ENCODE measurements at regions of chr3 and their contacts with region 1.

Region 1: GRCh38 chr3:133487920-133488540 is 85.5 kb upstream of the CDV3 start:
- DNase-seq: no peak
- ATAC-seq: no peak
- H3K4me3 ChIP-seq: no peak overlapping the region; the same call in 1 of the 2 replicates
- H3K27ac ChIP-seq: no peak overlapping the region
- H3K4me1 ChIP-seq: peaks cover 48% of the 10 kb centered on the region
- H3K27me3 ChIP-seq: no peaks in the 10 kb centered on the region
- CTCF ChIP-seq: peak; percentile 26 to 36 (median 35); a peak in 3 of 6 replicates
- EP300 ChIP-seq: no peak
- POLR2A ChIP-seq: no peak
- RAD21 ChIP-seq: peak; percentile 57

Region 2: DNA sequence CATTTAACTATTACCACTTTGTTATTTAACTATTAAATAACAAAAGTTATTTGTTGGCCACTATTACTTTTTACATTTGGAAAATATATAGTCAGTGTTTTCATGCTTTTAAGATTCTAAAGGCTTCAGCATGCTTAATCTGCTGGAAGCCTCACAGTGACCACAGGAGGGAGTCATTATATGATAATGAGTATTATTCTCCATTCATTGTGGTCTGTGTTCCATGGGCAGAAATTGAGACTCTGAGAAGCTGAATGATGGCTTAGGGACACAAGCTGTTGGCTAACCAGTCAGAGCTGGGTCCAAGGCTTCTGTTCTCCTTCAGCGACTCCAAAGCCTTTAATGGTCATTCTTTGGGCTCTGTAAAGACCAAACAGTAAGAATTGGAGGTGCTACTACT is 23.5 kb before region 1 on chr3:
- CTCF ChIA-PET with region 1: interaction called, 25 read pairs
- POLR2A ChIA-PET with region 1: interaction called, 5 read pairs
- RAD21 ChIA-PET with region 1: interaction called, 9 read pairs
- SMC1A ChIA-PET with region 1: interaction called, 38 read pairs
- in situ Hi-C with region 1: no loop called
- intact Hi-C with region 1: no loop called
- DNase-seq: no peak
- ATAC-seq: peak; percentile 65
- H3K4me3 ChIP-seq: no peak overlapping the region
- H3K27ac ChIP-seq: peak overlapping the region; percentile 4; the same call in 1 of the 2 replicates
- H3K4me1 ChIP-seq: peaks cover 58% of the 10 kb centered on the region
- H3K27me3 ChIP-seq: no peaks in the 10 kb centered on the region
- CTCF ChIP-seq: peak; percentile 22 to 32 (median 23); a peak in 3 of 6 replicates
- EP300 ChIP-seq: no peak
- POLR2A ChIP-seq: no peak
- RAD21 ChIP-seq: peak; percentile 58

Region 3: GRCh38 chr3:133506215-133506901 is 18.3 kb after region 1 on chr3:
- CTCF ChIA-PET with region 1: interaction called, 4 read pairs
- POLR2A ChIA-PET with region 1: interaction called, 5 read pairs
- RAD21 ChIA-PET with region 1: interaction called, 7 read pairs
- SMC1A ChIA-PET with region 1: interaction called, 76 read pairs
- in situ Hi-C with region 1: no loop called
- intact Hi-C with region 1: no loop called
- DNase-seq: peak; percentile 93
- ATAC-seq: peak; percentile 98
- H3K4me3 ChIP-seq: peak overlapping the region; percentile 43; the same call in 1 of the 2 replicates
- H3K27ac ChIP-seq: peak overlapping the region; percentile 97
- H3K4me1 ChIP-seq: peaks cover 18% of the 10 kb centered on the region
- H3K27me3 ChIP-seq: no peaks in the 10 kb centered on the region
- CTCF ChIP-seq: no peak
- EP300 ChIP-seq: peak in 1 of 2 experiments; percentile 61; a peak in 3 of 4 replicates
- POLR2A ChIP-seq: peak; percentile 49; the same call in 1 of the 2 replicates
- RAD21 ChIP-seq: 0 out of 2 replicates have a peak, but pooled peaks have one; percentile 17

Measured in GM12878 (cell line).